ENCODE measurements at regions of chr15 and their contacts with region 1.

Region 1: GRCh38 chr15:40952901-40953712 is at the start of gene CHAC1:
- H3K4me3 ChIP-seq: peak within 1 kb of the TSS; percentile 62
- H3K27ac ChIP-seq: peak within 1 kb of the TSS; percentile 94
- H3K4me1 ChIP-seq: peaks cover 5% of the 10 kb centered on the region; the same call in 1 of the 2 replicates
- CTCF ChIP-seq: peak; percentile 65

Region 2: GRCh38 chr15:40928821-40929659 is 24.1 kb before region 1 on chr15 and contains the start of gene DLL4:
- CTCF ChIA-PET with region 1: interaction called, 9 read pairs
- POLR2A ChIA-PET with region 1: interaction called, 54 read pairs
- H3K4me3 ChIP-seq: peak within 1 kb of the TSS; percentile 49
- H3K27ac ChIP-seq: peak within 1 kb of the TSS; percentile 20; the same call in 1 of the 2 replicates
- H3K4me1 ChIP-seq: no peaks in the 10 kb centered on the region
- CTCF ChIP-seq: no peak; the same call in 1 of the 2 replicates

Region 3: GRCh38 chr15:40941528-40942336 is 11.4 kb before region 1 on chr15:
- CTCF ChIA-PET with region 1: interaction called, 26 read pairs
- POLR2A ChIA-PET with region 1: interaction called, 64 read pairs
- H3K4me3 ChIP-seq: peak overlapping the region; percentile 41
- H3K27ac ChIP-seq: peak overlapping the region; percentile 73; the same call in 1 of the 2 replicates
- H3K4me1 ChIP-seq: peaks cover 4% of the 10 kb centered on the region; the same call in 1 of the 2 replicates
- CTCF ChIP-seq: peak; percentile 22; the same call in 1 of the 2 replicates

Region 4: DNA sequence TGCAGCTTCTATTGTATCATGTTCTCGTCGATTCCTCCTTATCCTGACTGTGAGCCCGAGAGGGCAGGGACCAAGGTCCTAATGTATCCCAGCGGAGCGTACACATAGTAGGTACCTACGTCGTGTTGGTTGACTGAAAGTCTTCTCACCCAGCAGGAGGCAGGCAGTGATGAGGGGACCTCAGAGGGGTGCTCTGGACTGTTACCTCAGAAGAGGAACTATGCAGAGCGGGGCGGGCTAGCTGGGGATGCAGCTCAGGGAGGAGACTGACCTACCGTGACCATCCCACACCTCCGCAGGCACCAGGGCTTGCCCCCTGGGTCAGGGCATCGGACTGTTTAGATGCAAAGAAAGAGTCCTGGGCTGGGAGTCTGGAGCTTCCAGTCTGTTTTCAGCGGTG is 11.5 kb after region 1 on chr15:
- CTCF ChIA-PET with region 1: no interaction called
- POLR2A ChIA-PET with region 1: interaction called, 18 read pairs
- H3K4me3 ChIP-seq: no peak overlapping the region
- H3K27ac ChIP-seq: no peak overlapping the region
- H3K4me1 ChIP-seq: no peaks in the 10 kb centered on the region
- CTCF ChIP-seq: no peak

Measured in HEK293 (cell line).